ENCODE measurements at regions of chr7 and their contacts with region 1.

Region 1: GRCh38 chr7:127667017-127667670 is 15.2 kb downstream of the SND1 start:
- DNase-seq: peak; percentile 61
- H3K4me3 ChIP-seq: peak overlapping the region in 1 of 3 experiments; percentile 1
- H3K27ac ChIP-seq: peak overlapping the region; percentile 93
- H3K4me1 ChIP-seq: peaks cover 37% of the 10 kb centered on the region
- H3K27me3 ChIP-seq: no peaks in the 10 kb centered on the region
- CTCF ChIP-seq: no peak
- POLR2A ChIP-seq: no peak

Region 2: DNA sequence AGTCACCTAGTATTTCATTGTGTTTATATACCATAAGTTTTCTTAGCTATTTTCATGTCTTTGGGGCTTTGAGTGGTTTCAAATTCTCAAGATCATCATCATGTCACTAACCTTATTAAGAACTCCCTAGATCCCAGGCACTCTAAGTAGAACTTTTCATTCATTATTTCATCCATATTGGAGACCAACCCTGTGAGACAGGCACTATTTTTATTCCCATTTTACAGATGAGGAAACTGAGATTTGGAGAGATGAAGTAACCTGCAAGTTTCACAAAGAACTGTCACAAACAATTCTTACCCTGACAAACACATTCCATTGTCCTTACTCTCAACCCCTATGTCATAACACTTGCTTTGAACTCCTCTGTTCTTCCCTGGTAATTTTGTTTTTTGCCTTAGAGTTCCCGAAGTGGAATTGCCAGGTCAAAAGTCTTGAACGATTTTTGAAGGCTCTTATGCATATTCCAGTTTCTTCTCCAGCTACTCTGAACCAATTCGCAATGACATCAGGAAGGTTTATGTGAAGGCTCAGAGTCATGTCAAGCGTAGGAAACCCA is 28.9 kb before region 1 on chr7:
- CTCF ChIA-PET with region 1: no interaction called
- POLR2A ChIA-PET with region 1: no interaction called
- dilution Hi-C with region 1: no loop called
- intact Hi-C with region 1: no loop called
- DNase-seq: no peak
- H3K4me3 ChIP-seq: no peak overlapping the region
- H3K27ac ChIP-seq: no peak overlapping the region
- H3K4me1 ChIP-seq: no peaks in the 10 kb centered on the region
- H3K27me3 ChIP-seq: peaks cover 6 to 16% of the 10 kb centered on the region in 2 experiments
- CTCF ChIP-seq: no peak
- POLR2A ChIP-seq: no peak

Region 3: GRCh38 chr7:127651556-127652332 is 15.4 kb before region 1 on chr7 and contains the start of gene SND1:
- CTCF ChIA-PET with region 1: interaction called, 14 read pairs
- POLR2A ChIA-PET with region 1: no interaction called
- dilution Hi-C with region 1: no loop called
- intact Hi-C with region 1: loop called (anchors 1 kb)
- DNase-seq: peak; percentile 98
- H3K4me3 ChIP-seq: peak within 1 kb of the TSS; percentile 50 to 94 (median 76)
- H3K27ac ChIP-seq: peak within 1 kb of the TSS; percentile 89
- H3K4me1 ChIP-seq: peaks cover 28% of the 10 kb centered on the region
- H3K27me3 ChIP-seq: peaks cover 2 to 3% of the 10 kb centered on the region in 2 experiments
- CTCF ChIP-seq: no peak
- POLR2A ChIP-seq: peak; percentile 88
- total RNA-seq, gene SND1: 234 and 249 TPM in 2 replicates

Measured in endothelial cell of umbilical vein (primary cell).